Endothelial cell of umbilical vein (primary cell): ENCODE measurements at regions of chr4 and their contacts with region 1.

Region 1: GRCh38 chr4:185096032-185096653 is 46.9 kb upstream of the SLC25A4 start:
- DNase-seq: peak; percentile 49
- H3K4me3 ChIP-seq: no peak overlapping the region
- H3K27ac ChIP-seq: no peak overlapping the region
- H3K4me1 ChIP-seq: no peaks in the 10 kb centered on the region
- H3K27me3 ChIP-seq: peaks cover 2 to 11% of the 10 kb centered on the region in 2 experiments
- CTCF ChIP-seq: peak; percentile 31 to 39
- POLR2A ChIP-seq: no peak

Region 2: GRCh38 chr4:185031611-185032010 is 64.5 kb before region 1 on chr4:
- CTCF ChIA-PET with region 1: interaction called, 168 read pairs
- POLR2A ChIA-PET with region 1: no interaction called
- dilution Hi-C with region 1: no loop called
- intact Hi-C with region 1: no loop called
- DNase-seq: no peak
- H3K4me3 ChIP-seq: no peak overlapping the region
- H3K27ac ChIP-seq: no peak overlapping the region
- H3K4me1 ChIP-seq: no peaks in the 10 kb centered on the region
- H3K27me3 ChIP-seq: peaks cover 0 to 16% of the 10 kb centered on the region in 2 experiments
- CTCF ChIP-seq: no peak
- POLR2A ChIP-seq: no peak

Region 3: GRCh38 chr4:185082561-185082960 is 13.6 kb before region 1 on chr4:
- CTCF ChIA-PET with region 1: interaction called, 21 read pairs
- POLR2A ChIA-PET with region 1: interaction called, 3 read pairs
- dilution Hi-C with region 1: no loop called
- intact Hi-C with region 1: no loop called
- DNase-seq: no peak
- H3K4me3 ChIP-seq: no peak overlapping the region
- H3K27ac ChIP-seq: no peak overlapping the region
- H3K4me1 ChIP-seq: no peaks in the 10 kb centered on the region
- H3K27me3 ChIP-seq: peaks cover 2 to 8% of the 10 kb centered on the region in 2 experiments
- CTCF ChIP-seq: no peak
- POLR2A ChIP-seq: no peak

Region 4: GRCh38 chr4:185115827-185116232 is 19.7 kb after region 1 on chr4:
- CTCF ChIA-PET with region 1: interaction called, 14 read pairs
- POLR2A ChIA-PET with region 1: no interaction called
- dilution Hi-C with region 1: no loop called
- intact Hi-C with region 1: no loop called
- DNase-seq: peak; percentile 51
- H3K4me3 ChIP-seq: no peak overlapping the region
- H3K27ac ChIP-seq: no peak overlapping the region
- H3K4me1 ChIP-seq: peaks cover 9% of the 10 kb centered on the region
- H3K27me3 ChIP-seq: no peaks in the 10 kb centered on the region
- CTCF ChIP-seq: no peak
- POLR2A ChIP-seq: no peak

Region 5: DNA sequence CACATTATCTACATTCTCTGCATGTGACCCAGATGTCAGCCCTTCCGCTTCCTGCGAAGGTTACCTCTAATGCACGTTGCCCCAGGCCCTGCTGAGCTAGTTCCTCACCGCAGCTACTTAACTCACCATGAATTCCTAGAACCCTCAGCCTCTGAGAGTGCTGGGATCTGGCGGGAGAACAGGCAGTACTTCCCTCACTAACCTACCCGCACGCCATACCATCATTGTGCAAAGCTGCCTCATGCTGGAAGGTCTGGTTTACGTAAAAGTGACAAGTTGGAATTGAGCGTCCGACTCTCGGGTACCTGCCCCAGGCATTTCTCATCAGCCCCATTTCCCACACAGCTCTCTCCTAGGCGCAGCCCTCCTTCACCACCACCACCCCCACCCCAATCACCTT is 53.2 kb after region 1 on chr4:
- CTCF ChIA-PET with region 1: no interaction called
- POLR2A ChIA-PET with region 1: no interaction called
- dilution Hi-C with region 1: no loop called
- intact Hi-C with region 1: no loop called
- DNase-seq: no peak
- H3K4me3 ChIP-seq: no peak overlapping the region
- H3K27ac ChIP-seq: no peak overlapping the region
- H3K4me1 ChIP-seq: no peaks in the 10 kb centered on the region
- H3K27me3 ChIP-seq: no peaks in the 10 kb centered on the region
- CTCF ChIP-seq: no peak
- POLR2A ChIP-seq: no peak